Activated CD4-positive, alpha-beta T cell treated with anti-CD3 and anti-CD28 coated beads for 36 hours (primary cell): ENCODE measurements at regions of chr5 and their contacts with region 1.

Region 1: GRCh38 chr5:57327561-57328394 is 153.9 kb downstream of the GPBP1 start:
- DNase-seq: peak; percentile 9
- ATAC-seq: peak; percentile 58
- H3K4me3 Mint-ChIP-seq: no peak overlapping the region
- H3K27ac Mint-ChIP-seq: no peak overlapping the region
- H3K4me1 Mint-ChIP-seq: peaks cover 24% of the 10 kb centered on the region
- H3K27me3 Mint-ChIP-seq: no peaks in the 10 kb centered on the region

Region 2: GRCh38 chr5:57338068-57338892 is 10.5 kb after region 1 on chr5:
- CTCF ChIA-PET with region 1: interaction called, 11 read pairs
- POLR2A ChIA-PET with region 1: no interaction called
- intact Hi-C with region 1: no loop called
- DNase-seq: peak; percentile 36
- ATAC-seq: peak; percentile 58
- H3K4me3 Mint-ChIP-seq: no peak overlapping the region
- H3K27ac Mint-ChIP-seq: no peak overlapping the region
- H3K4me1 Mint-ChIP-seq: no peaks in the 10 kb centered on the region
- H3K27me3 Mint-ChIP-seq: no peaks in the 10 kb centered on the region